ENCODE measurements at regions of chr9 and their contacts with region 1.

Region 1: GRCh38 chr9:86948074-86948929 is 996 bp upstream of the GAS1 start:
- DNase-seq: peak; percentile 83
- H3K4me3 Mint-ChIP-seq: peak overlapping the region; percentile 75
- H3K27ac Mint-ChIP-seq: no peak overlapping the region
- H3K4me1 Mint-ChIP-seq: peaks cover 11% of the 10 kb centered on the region
- H3K27me3 Mint-ChIP-seq: peaks cover 19% of the 10 kb centered on the region

Region 2: DNA sequence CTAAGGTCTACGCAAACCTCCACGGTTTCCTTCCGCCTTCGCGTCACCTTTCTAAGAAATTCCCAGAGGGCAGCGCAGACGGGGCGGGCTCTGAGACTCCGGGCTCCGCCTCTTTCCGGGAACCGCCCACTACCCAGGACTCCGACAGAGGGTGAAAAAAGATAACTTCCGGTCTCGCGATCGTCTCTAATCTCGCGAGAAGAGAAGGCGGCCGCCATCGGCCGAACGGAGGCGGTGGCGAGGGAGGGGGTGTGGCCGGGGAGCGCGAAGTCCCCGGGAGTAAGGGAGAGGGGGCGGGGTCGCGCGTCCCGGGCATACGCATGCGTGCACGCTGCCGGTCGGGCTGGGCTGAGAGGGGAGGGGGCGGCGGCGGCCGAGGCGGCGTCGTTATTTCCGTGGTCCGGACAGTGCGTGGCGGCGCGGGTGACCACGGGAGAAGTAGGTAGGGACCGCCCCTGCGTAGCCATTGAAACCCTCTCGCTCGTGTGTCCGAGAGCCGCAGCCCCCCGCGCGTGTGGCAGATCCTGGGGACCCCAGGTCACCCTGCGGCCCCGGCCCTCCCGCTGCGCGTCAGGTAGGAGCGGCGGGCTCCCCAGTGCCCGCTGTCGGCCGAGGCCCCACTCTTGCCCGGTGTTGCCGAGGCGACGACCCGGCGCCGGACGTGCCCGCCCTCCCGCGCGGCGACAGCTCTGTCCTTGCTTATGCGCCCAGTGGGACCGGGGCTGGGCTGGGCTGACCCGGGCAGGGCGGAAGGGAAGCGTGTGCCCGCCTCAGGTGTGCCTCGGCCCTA is 1007.3 kb before region 1 on chr9 and contains the start of gene NAA35:
- CTCF ChIA-PET with region 1: no interaction called
- POLR2A ChIA-PET with region 1: no interaction called
- intact Hi-C with region 1: loop called (anchors 5 kb)
- DNase-seq: peak; percentile 99
- H3K4me3 Mint-ChIP-seq: no peak within 1 kb of the TSS
- H3K27ac Mint-ChIP-seq: peak within 1 kb of the TSS; percentile 96
- H3K4me1 Mint-ChIP-seq: peaks cover 15% of the 10 kb centered on the region
- H3K27me3 Mint-ChIP-seq: no peaks in the 10 kb centered on the region
- total RNA-seq, gene NAA35: 23.0 to 24.3 TPM

Region 3: DNA sequence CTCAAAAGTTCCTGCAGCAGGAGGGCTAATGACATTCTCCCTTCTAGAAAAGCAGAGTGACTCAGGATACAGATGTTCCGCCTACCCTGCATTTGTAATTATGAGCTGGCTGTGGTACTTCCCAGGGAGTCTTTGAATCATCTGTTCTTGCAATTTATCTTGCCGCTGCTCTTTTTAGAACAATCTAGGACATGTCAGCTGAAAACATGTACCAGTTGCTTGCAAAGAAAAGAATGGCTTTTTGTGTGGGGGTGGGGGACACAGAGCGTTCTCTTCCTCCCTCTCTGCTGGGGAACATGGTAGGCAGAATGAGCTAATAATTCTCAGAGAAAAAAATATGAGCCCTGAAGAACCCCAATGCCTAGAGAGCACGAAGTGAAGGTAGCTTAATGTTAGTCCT is 542.4 kb before region 1 on chr9:
- CTCF ChIA-PET with region 1: no interaction called
- POLR2A ChIA-PET with region 1: no interaction called
- intact Hi-C with region 1: loop called (anchors 10 kb)
- DNase-seq: peak; percentile 57
- H3K4me3 Mint-ChIP-seq: peak overlapping the region; percentile 17
- H3K27ac Mint-ChIP-seq: peak overlapping the region; percentile 40
- H3K4me1 Mint-ChIP-seq: peaks cover 20% of the 10 kb centered on the region
- H3K27me3 Mint-ChIP-seq: peaks cover 21% of the 10 kb centered on the region

Region 4: DNA sequence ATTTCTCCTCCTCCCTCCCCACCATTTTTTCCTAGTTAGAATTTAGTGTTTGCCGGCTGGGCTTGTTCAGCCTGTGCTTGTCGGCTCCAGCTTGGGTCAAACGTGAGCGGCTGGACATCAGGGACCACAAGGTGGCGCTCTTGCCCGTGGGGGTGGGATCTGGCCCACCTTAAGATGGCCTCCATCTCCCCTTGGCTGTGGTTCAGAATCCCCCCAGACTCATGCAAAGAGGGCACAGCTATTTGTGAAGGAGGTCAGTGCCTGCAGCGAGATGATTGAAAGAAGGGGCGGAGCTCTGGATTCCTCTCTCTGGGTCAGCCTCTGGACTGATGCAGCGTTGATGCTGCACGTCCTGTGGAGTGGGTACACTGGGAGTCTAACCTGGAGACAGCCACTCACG is 310.8 kb before region 1 on chr9:
- CTCF ChIA-PET with region 1: no interaction called
- POLR2A ChIA-PET with region 1: no interaction called
- intact Hi-C with region 1: loop called (anchors 10 kb)
- DNase-seq: peak; percentile 24
- H3K4me3 Mint-ChIP-seq: no peak overlapping the region
- H3K27ac Mint-ChIP-seq: no peak overlapping the region
- H3K4me1 Mint-ChIP-seq: no peaks in the 10 kb centered on the region
- H3K27me3 Mint-ChIP-seq: peaks cover 22% of the 10 kb centered on the region

Region 5: DNA sequence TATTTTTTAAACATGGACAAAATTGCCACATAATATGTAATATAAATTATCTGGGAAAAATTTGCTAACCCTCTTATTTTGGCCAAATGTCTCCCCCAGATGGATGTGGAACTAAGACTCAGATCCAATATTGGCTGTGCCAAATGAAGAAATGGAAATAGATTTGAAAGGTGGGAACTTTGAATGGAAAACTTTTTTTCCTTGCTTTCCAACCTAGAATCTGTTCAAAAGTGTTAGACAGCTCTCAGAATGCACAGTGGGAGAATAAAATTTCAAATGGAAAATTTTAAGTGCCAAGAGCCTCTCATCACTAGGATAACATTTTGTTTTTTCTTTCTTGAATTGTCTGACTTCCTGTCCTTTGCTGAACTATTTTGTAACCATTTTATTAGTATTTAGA is 141.6 kb after region 1 on chr9:
- CTCF ChIA-PET with region 1: no interaction called
- POLR2A ChIA-PET with region 1: no interaction called
- intact Hi-C with region 1: no loop called
- DNase-seq: no peak
- H3K4me3 Mint-ChIP-seq: no peak overlapping the region
- H3K27ac Mint-ChIP-seq: no peak overlapping the region
- H3K4me1 Mint-ChIP-seq: no peaks in the 10 kb centered on the region
- H3K27me3 Mint-ChIP-seq: no peaks in the 10 kb centered on the region

Region 6: GRCh38 chr9:87382902-87383301 is 434.6 kb after region 1 on chr9:
- CTCF ChIA-PET with region 1: no interaction called
- POLR2A ChIA-PET with region 1: no interaction called
- intact Hi-C with region 1: no loop called
- DNase-seq: no peak
- H3K4me3 Mint-ChIP-seq: no peak overlapping the region
- H3K27ac Mint-ChIP-seq: no peak overlapping the region
- H3K4me1 Mint-ChIP-seq: no peaks in the 10 kb centered on the region
- H3K27me3 Mint-ChIP-seq: peaks cover 8% of the 10 kb centered on the region

Region 7: GRCh38 chr9:87973730-87974292 is 1025.5 kb after region 1 on chr9:
- CTCF ChIA-PET with region 1: no interaction called
- POLR2A ChIA-PET with region 1: no interaction called
- intact Hi-C with region 1: loop called (anchors 10 kb)
- DNase-seq: no peak
- H3K4me3 Mint-ChIP-seq: peak overlapping the region; percentile 91
- H3K27ac Mint-ChIP-seq: peak overlapping the region; percentile 18
- H3K4me1 Mint-ChIP-seq: peaks cover 14% of the 10 kb centered on the region
- H3K27me3 Mint-ChIP-seq: peaks cover 3% of the 10 kb centered on the region